ENCODE measurements at regions of chr22 and their contacts with region 1.

Region 1: DNA sequence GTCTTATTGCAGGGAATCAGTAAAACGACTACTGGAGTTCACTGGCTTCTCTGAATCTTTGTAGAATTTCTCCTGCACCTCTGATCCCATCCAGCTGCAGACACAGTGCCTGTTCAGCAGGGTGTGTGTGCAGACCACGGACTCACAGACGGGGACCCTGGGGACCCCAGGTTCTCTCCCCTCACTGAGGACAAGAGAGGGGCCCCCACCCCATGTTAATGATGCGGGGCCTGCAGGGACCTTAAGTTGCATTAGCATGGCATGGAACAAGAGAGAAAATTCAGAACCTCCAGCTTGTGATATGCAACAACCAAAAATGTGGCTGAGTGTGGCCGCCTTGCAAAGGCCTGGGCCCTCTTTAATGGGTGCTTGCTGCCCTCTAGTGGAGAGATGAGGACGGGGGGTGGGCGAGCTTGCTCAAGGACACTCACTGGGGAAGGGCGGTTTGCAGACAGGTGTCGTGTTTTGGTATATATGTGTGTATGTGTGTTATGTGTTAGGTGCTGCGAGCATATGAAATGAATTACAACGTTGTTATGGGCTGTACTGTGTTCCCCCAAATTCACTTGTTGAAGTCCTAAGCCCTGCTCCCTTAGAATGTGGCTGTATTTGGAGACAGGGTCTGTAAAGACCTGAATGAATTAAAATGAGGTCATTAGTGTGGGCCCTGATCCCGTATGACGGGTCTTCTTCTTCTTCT is 84.4 kb upstream of the SEPTIN5 start:
- DNase-seq: peak; percentile 98 to 100 (median 100)
- ATAC-seq: peak; percentile 89
- H3K4me3 ChIP-seq: no peak overlapping the region
- H3K27ac ChIP-seq: no peak overlapping the region
- H3K4me1 ChIP-seq: peaks cover 15 to 27% of the 10 kb centered on the region in 2 experiments; a peak in 4 of 5 replicates
- H3K27me3 ChIP-seq: peaks cover 2 to 20% of the 10 kb centered on the region in 2 experiments; a peak in 4 of 5 replicates
- CTCF ChIP-seq: peak; percentile 99 to 100 (median 99)
- EP300 ChIP-seq: peak; percentile 48; the same call in 1 of the 2 replicates
- POLR2A ChIP-seq: no peak
- RAD21 ChIP-seq: peak; percentile 100

Region 2: GRCh38 chr22:19143967-19144400 is 485.9 kb before region 1 on chr22:
- CTCF ChIA-PET with region 1: interaction called, 26 read pairs
- POLR2A ChIA-PET with region 1: interaction called, 7 read pairs
- in situ Hi-C with region 1: no loop called
- intact Hi-C with region 1: loop called (anchors 1 kb)
- DNase-seq: peak; percentile 79 to 82 (median 80)
- ATAC-seq: peak; percentile 48
- H3K4me3 ChIP-seq: peak overlapping the region; percentile 59
- H3K27ac ChIP-seq: peak overlapping the region; percentile 50
- H3K4me1 ChIP-seq: peaks cover 4 to 19% of the 10 kb centered on the region in 2 experiments; a peak in 4 of 5 replicates
- H3K27me3 ChIP-seq: peaks cover 14 to 26% of the 10 kb centered on the region in 2 experiments; a peak in 4 of 5 replicates
- CTCF ChIP-seq: no peak
- EP300 ChIP-seq: no peak
- POLR2A ChIP-seq: no peak
- RAD21 ChIP-seq: no peak

Region 3: DNA sequence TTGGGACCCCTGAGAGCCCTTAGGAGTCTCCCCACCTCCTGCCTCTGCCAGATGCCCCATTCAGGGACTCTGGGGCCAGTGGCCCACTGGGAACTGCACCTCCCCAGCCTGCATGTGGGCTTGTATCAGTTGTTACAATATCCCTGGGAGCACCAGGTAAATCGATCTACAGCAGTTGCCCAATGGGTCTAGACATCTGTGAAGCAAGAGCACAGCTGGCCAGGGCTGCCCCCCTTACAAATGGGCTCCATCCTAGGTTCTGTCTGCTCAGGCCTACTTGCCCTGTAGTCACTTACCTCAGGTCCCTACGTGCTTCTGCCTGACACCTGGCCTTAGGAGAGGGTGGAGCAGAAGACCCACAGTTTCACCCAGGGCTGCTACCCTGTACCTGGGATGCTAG is 261.0 kb before region 1 on chr22:
- CTCF ChIA-PET with region 1: no interaction called
- POLR2A ChIA-PET with region 1: no interaction called
- in situ Hi-C with region 1: no loop called
- intact Hi-C with region 1: loop called (anchors 5 kb)
- DNase-seq: no peak
- ATAC-seq: no peak; the same call in 1 of the 3 replicates
- H3K4me3 ChIP-seq: no peak overlapping the region
- H3K27ac ChIP-seq: no peak overlapping the region
- H3K4me1 ChIP-seq: no peaks in the 10 kb centered on the region
- H3K27me3 ChIP-seq: no peaks in the 10 kb centered on the region
- CTCF ChIP-seq: no peak
- EP300 ChIP-seq: no peak
- POLR2A ChIP-seq: no peak
- RAD21 ChIP-seq: no peak

Region 4: DNA sequence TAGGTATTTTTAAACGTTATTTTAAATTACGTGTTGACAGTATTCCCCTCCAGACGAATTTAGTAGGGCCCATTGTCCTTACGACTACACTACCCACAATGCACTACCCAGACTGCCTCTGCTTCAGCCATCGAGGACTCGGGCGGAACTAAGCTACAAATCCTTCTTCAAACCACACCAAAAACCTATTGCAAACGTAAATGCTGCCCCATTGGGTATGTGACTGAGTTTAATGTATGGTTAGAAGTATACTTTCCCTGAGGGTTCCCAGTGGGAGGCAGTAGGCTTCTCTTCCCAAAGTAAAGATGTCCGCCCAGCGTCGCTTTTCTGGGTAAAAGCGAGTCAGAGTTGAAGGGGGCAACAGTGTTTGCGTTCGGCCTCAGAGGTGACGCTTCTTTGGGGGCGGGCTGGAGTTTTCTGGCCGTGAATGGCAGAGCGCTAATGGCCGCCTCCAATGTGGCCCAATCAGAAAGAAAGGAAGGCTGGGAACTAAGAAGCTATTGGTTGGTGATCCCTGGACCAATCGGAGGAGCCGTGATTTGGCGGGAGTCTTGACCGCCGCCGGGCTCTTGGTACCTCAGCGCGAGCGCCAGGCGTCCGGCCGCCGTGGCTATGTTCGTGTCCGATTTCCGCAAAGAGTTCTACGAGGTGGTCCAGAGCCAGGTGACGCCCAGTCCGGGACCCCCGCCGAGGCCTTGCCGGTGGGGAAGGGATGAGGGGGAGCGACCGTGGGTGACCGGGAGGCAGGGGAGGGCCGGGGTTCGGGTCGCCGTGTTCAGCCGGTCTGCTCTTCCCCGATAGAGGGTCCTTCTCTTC is 150.3 kb before region 1 on chr22 and contains the start of gene CDC45:
- CTCF ChIA-PET with region 1: interaction called, 5 read pairs
- POLR2A ChIA-PET with region 1: interaction called, 8 read pairs
- in situ Hi-C with region 1: no loop called
- intact Hi-C with region 1: loop called (anchors 5 kb)
- DNase-seq: peak; percentile 100
- ATAC-seq: peak; percentile 93
- H3K4me3 ChIP-seq: peak within 1 kb of the TSS; percentile 70
- H3K27ac ChIP-seq: peak within 1 kb of the TSS; percentile 97
- H3K4me1 ChIP-seq: peaks cover 7 to 16% of the 10 kb centered on the region in 2 experiments
- H3K27me3 ChIP-seq: no peaks in the 10 kb centered on the region
- CTCF ChIP-seq: 0 out of 6 replicates have a peak, but pooled peaks of 2 of the 3 experiments have one; percentile 9 to 11
- EP300 ChIP-seq: peak; percentile 35
- POLR2A ChIP-seq: no peak
- RAD21 ChIP-seq: peak in 1 of 2 experiments; percentile 42; a peak in 2 of 4 replicates
- polyA plus RNA-seq, gene CDC45: 276 to 465 TPM

Region 5: GRCh38 chr22:19576460-19577421 is 53.1 kb before region 1 on chr22:
- CTCF ChIA-PET with region 1: interaction called, 3 read pairs
- POLR2A ChIA-PET with region 1: interaction called, 3 read pairs
- in situ Hi-C with region 1: no loop called
- intact Hi-C with region 1: loop called (anchors 1 kb)
- DNase-seq: peak; percentile 83 to 91 (median 88)
- ATAC-seq: peak; percentile 77
- H3K4me3 ChIP-seq: no peak overlapping the region
- H3K27ac ChIP-seq: no peak overlapping the region
- H3K4me1 ChIP-seq: peaks cover 20 to 26% of the 10 kb centered on the region in 2 experiments
- H3K27me3 ChIP-seq: peaks cover 70 to 80% of the 10 kb centered on the region in 2 experiments
- CTCF ChIP-seq: peak in 2 of 3 experiments; percentile 14 to 32; a peak in 3 of 6 replicates
- EP300 ChIP-seq: no peak
- POLR2A ChIP-seq: no peak
- RAD21 ChIP-seq: peak in 1 of 2 experiments; percentile 46; a peak in 2 of 4 replicates

Region 6: GRCh38 chr22:19909350-19910179 is 279.7 kb after region 1 on chr22:
- CTCF ChIA-PET with region 1: interaction called, 7 read pairs
- POLR2A ChIA-PET with region 1: no interaction called
- in situ Hi-C with region 1: no loop called
- intact Hi-C with region 1: loop called (anchors 1 kb)
- DNase-seq: peak; percentile 97 to 99 (median 98)
- ATAC-seq: peak; percentile 97
- H3K4me3 ChIP-seq: no peak overlapping the region
- H3K27ac ChIP-seq: peak overlapping the region; percentile 16; the same call in 1 of the 3 replicates
- H3K4me1 ChIP-seq: peaks cover 2 to 28% of the 10 kb centered on the region in 2 experiments; a peak in 4 of 5 replicates
- H3K27me3 ChIP-seq: no peaks in the 10 kb centered on the region; a peak in 1 of 5 replicates
- CTCF ChIP-seq: peak; percentile 98 to 100 (median 100)
- EP300 ChIP-seq: peak; percentile 51
- POLR2A ChIP-seq: peak; percentile 25; the same call in 1 of the 2 replicates
- RAD21 ChIP-seq: peak; percentile 100